Heart left ventricle (tissue), 16 donors: ENCODE measurements at regions of chr7 and their contacts with region 1.

Region 1: GRCh38 chr7:45160417-45160881 is 2.9 kb downstream of the RAMP3 start:
- DNase-seq: peak in 1 of 5 donors; percentile 39
- ATAC-seq: peak in 2 of 4 donors; percentile 15 to 20
- H3K4me3 ChIP-seq: peak overlapping the region in 9 of 12 donors; percentile 13 to 75 (median 66)
- H3K27ac ChIP-seq: peak overlapping the region in 11 of 12 donors; percentile 20 to 93 (median 83)
- H3K4me1 ChIP-seq: peaks cover 0 to 16% (median 0%) of the 10 kb centered on the region in 12 donors
- H3K27me3 ChIP-seq: peaks cover 0 to 18% (median 9%) of the 10 kb centered on the region in 9 donors
- CTCF ChIP-seq: no peak
- POLR2A ChIP-seq: no peak

Region 2: GRCh38 chr7:45211066-45211465 is 50.6 kb after region 1 on chr7:
- intact Hi-C with region 1: loop called in 3 of 10 experiments (anchors 2 to 5 kb)
- DNase-seq: peak in 4 of 5 donors; percentile 61 to 72 (median 66)
- ATAC-seq: peak; percentile 86 to 97 (median 92)
- H3K4me3 ChIP-seq: no peak overlapping the region
- H3K27ac ChIP-seq: peak overlapping the region in 10 of 12 donors; percentile 56 to 90 (median 74)
- H3K4me1 ChIP-seq: peaks cover 0 to 30% (median 12%) of the 10 kb centered on the region in 12 donors
- H3K27me3 ChIP-seq: peaks cover 0 to 21% (median 0%) of the 10 kb centered on the region in 9 donors
- CTCF ChIP-seq: no peak
- POLR2A ChIP-seq: no peak

Region 3: GRCh38 chr7:45239486-45239885 is 79.0 kb after region 1 on chr7:
- intact Hi-C with region 1: loop called in 2 of 10 experiments (anchors 5 kb)
- DNase-seq: no peak
- ATAC-seq: no peak
- H3K4me3 ChIP-seq: no peak overlapping the region
- H3K27ac ChIP-seq: peak overlapping the region; percentile 41 to 82 (median 60)
- H3K4me1 ChIP-seq: peaks cover 0 to 33% (median 15%) of the 10 kb centered on the region in 12 donors
- H3K27me3 ChIP-seq: peaks cover 0 to 4% (median 0%) of the 10 kb centered on the region in 9 donors
- CTCF ChIP-seq: no peak
- POLR2A ChIP-seq: no peak

Region 4: GRCh38 chr7:45259966-45260646 is 99.7 kb after region 1 on chr7:
- intact Hi-C with region 1: loop called in 5 of 10 experiments (anchors 1 to 2 kb)
- DNase-seq: peak; percentile 47 to 83 (median 60)
- ATAC-seq: peak; percentile 58 to 89 (median 81)
- H3K4me3 ChIP-seq: peak overlapping the region in 1 of 12 donors; percentile 14
- H3K27ac ChIP-seq: no peak overlapping the region
- H3K4me1 ChIP-seq: peaks cover 0 to 7% (median 0%) of the 10 kb centered on the region in 12 donors
- H3K27me3 ChIP-seq: peaks cover 0 to 16% (median 0%) of the 10 kb centered on the region in 9 donors
- CTCF ChIP-seq: peak; percentile 92 to 99 (median 98)
- POLR2A ChIP-seq: no peak

Region 5: DNA sequence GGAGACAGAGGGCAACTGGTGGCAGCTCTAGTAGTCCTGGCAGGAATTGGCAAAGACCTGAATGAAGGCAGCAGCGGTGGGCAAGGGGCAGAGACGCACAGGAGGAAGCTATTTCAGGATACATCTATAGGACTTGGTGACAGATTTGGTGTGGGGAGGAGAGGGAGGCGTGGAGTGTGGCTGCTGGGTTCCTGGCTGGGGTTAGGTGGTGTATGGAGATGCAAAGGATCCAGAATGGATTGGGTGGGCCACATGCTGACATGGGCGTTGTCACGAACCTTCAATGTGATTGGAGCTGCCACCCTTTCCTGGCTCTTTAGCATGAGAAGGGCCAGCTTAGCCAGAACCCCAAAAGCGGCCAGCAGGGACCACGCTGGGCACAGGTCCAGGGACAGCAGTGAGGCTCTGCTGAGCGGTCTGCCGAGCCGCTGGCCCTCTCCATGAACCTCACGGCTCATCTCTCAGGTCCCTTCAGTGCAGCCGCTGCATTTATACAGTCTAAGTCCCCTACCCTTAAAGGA is 403.6 kb after region 1 on chr7:
- intact Hi-C with region 1: loop called in 1 of 10 experiments (anchors 10 kb)
- DNase-seq: peak in 1 of 5 donors; percentile 71
- ATAC-seq: peak; percentile 29 to 75 (median 50)
- H3K4me3 ChIP-seq: peak overlapping the region in 9 of 12 donors; percentile 1 to 37 (median 25)
- H3K27ac ChIP-seq: peak overlapping the region in 9 of 12 donors; percentile 29 to 67 (median 44)
- H3K4me1 ChIP-seq: peaks cover 0 to 28% (median 12%) of the 10 kb centered on the region in 12 donors
- H3K27me3 ChIP-seq: no peaks in the 10 kb centered on the region
- CTCF ChIP-seq: no peak
- POLR2A ChIP-seq: no peak

Region 6: DNA sequence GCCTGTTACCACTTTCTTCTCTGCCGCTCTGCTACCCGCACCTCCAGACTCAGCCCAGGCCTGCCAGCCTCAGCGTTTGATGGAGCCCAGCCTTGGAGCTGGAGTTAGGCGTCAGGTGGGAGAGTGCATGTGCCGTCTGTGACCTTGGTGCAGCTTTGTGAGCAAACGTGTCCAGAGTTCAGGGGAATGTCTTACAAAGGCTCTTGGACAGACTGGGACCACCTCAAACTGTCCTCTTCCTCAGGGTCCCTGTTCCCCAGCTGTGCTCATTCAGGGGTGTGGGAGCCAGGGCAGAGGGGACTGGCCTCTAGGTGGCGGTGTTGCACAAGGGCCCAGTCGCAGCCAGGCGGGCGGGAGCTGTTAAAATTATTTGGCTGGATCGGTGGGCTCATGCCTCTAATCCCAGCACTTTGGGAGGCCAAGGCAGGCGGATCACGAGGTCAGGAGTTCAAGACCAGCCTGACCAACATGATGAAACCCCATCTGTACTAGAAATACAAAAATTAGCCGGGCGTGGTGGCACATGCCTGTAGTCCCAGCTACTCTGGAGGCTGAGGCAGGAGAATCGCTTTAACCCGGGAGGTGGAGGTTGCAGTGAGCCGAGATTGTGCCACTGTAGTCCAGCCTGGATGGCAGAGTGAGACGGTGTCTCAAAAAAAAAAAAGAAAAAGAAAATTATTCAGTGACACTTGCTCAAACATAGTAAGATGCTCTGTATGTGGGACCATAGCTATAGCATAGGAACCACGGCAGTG is 502.9 kb after region 1 on chr7:
- intact Hi-C with region 1: loop called in 1 of 10 experiments (anchors 10 kb)
- DNase-seq: peak in 2 of 5 donors; percentile 26 to 73
- ATAC-seq: peak in 3 of 4 donors; percentile 61 to 68 (median 66)
- H3K4me3 ChIP-seq: no peak overlapping the region
- H3K27ac ChIP-seq: no peak overlapping the region
- H3K4me1 ChIP-seq: no peaks in the 10 kb centered on the region
- H3K27me3 ChIP-seq: no peaks in the 10 kb centered on the region
- CTCF ChIP-seq: peak; percentile 57 to 79 (median 69)
- POLR2A ChIP-seq: no peak

Region 7: GRCh38 chr7:45863715-45864114 is 703.3 kb after region 1 on chr7:
- intact Hi-C with region 1: loop called in 5 of 10 experiments (anchors 5 to 10 kb)
- DNase-seq: no peak
- ATAC-seq: no peak
- H3K4me3 ChIP-seq: no peak overlapping the region
- H3K27ac ChIP-seq: no peak overlapping the region
- H3K4me1 ChIP-seq: no peaks in the 10 kb centered on the region
- H3K27me3 ChIP-seq: peaks cover 0 to 18% (median 0%) of the 10 kb centered on the region in 9 donors
- CTCF ChIP-seq: no peak
- POLR2A ChIP-seq: no peak